ENCODE measurements at regions of chr19 and their contacts with region 1.

Region 1: DNA sequence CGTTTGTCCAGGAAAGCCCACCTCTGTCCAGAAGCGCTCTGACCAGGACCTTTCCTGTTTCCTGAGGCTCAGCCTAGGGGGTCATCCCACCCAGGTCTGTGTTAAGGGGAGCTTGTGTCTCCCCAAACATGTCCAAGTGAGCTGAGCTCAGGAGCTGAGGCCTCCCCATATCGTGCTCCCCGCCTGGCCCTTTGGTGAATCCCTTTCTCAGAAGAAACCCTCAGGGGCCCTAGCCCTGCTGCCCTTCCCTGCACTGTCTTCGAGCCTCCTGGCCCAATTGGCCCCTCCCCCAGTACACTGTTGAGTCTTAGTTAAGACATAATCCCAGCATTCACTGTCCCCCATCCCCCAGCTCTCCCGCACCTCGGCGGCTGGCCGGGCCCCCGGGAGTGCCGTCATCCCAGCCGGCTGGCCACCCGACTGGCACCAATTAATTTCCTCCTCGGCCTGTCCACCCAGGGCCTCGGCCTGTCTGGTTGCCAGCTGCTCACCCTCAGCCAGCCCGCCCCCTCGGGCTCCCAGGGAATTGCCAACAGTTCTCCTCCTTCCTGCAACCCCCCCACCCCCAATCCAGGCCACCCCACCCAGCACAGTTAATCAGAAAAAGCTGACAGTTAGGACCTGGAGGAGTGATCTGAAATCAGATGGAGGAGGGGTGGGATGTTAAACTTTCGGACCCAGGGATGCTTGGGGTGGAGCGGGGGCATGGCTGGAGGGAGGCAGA is 13.6 kb downstream of the IER2 start:
- DNase-seq: peak; percentile 72 to 83 (median 76)
- ATAC-seq: peak; percentile 15 to 53 (median 34)
- H3K4me3 ChIP-seq: peak overlapping the region in 10 of 12 donors; percentile 32 to 62 (median 52)
- H3K27ac ChIP-seq: peak overlapping the region; percentile 84 to 99 (median 96)
- H3K4me1 ChIP-seq: peaks cover 8 to 83% (median 50%) of the 10 kb centered on the region in 12 donors
- H3K27me3 ChIP-seq: no peaks in the 10 kb centered on the region
- CTCF ChIP-seq: no peak
- POLR2A ChIP-seq: no peak

Region 2: GRCh38 chr19:12825254-12826131 is 338.3 kb before region 1 on chr19:
- intact Hi-C with region 1: no loop called
- DNase-seq: no peak
- ATAC-seq: no peak
- H3K4me3 ChIP-seq: no peak overlapping the region
- H3K27ac ChIP-seq: no peak overlapping the region
- H3K4me1 ChIP-seq: peaks cover 0 to 11% (median 0%) of the 10 kb centered on the region in 12 donors
- H3K27me3 ChIP-seq: peaks cover 18 to 70% (median 57%) of the 10 kb centered on the region in 9 donors
- CTCF ChIP-seq: peak in 5 of 12 donors; percentile 6 to 39 (median 29)
- POLR2A ChIP-seq: no peak

Region 3: GRCh38 chr19:13093407-13094105 is 70.2 kb before region 1 on chr19:
- intact Hi-C with region 1: no loop called
- DNase-seq: peak; percentile 80 to 91 (median 84)
- ATAC-seq: peak; percentile 36 to 75 (median 62)
- H3K4me3 ChIP-seq: no peak overlapping the region
- H3K27ac ChIP-seq: peak overlapping the region; percentile 36 to 96 (median 82)
- H3K4me1 ChIP-seq: peaks cover 0 to 97% (median 76%) of the 10 kb centered on the region in 12 donors
- H3K27me3 ChIP-seq: peaks cover 0 to 12% (median 0%) of the 10 kb centered on the region in 9 donors
- CTCF ChIP-seq: peak; percentile 90 to 98 (median 96)
- POLR2A ChIP-seq: no peak

Region 4: DNA sequence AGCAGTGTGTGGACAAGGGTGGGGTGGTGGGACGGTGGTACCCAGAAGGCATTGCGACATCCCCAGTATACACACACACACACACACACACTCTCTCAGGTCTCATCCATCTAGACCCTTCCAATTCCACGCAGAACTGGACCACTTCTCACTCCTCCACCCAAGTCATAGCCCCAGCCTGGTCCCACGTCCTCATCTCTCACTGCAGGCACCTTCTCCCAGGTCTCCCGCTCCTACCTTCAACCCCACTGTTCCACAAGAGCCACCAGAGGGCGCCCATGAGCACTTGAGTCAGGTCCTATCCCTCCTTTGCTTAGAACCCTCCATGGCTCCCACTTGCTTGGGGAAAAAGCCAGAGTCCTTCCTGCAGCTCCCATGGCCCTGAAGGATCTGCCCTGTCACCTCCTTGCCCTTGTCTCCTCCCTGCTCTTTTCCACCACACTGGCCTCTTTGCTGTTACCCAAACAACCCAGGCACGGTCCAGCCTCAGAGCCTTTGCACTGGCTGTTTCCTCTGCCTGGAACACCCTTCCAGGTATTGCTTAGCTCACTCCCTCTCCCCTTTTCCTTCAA is 49.1 kb after region 1 on chr19:
- intact Hi-C with region 1: loop called in 4 of 10 experiments (anchors 5 kb)
- DNase-seq: peak; percentile 27 to 80 (median 51)
- ATAC-seq: peak in 2 of 4 donors; percentile 28 to 36
- H3K4me3 ChIP-seq: no peak overlapping the region
- H3K27ac ChIP-seq: no peak overlapping the region
- H3K4me1 ChIP-seq: peaks cover 0 to 10% (median 0%) of the 10 kb centered on the region in 12 donors
- H3K27me3 ChIP-seq: no peaks in the 10 kb centered on the region
- CTCF ChIP-seq: peak; percentile 25 to 57 (median 48)
- POLR2A ChIP-seq: no peak